ENCODE measurements at regions of chr14 and their contacts with region 1.

Region 1: DNA sequence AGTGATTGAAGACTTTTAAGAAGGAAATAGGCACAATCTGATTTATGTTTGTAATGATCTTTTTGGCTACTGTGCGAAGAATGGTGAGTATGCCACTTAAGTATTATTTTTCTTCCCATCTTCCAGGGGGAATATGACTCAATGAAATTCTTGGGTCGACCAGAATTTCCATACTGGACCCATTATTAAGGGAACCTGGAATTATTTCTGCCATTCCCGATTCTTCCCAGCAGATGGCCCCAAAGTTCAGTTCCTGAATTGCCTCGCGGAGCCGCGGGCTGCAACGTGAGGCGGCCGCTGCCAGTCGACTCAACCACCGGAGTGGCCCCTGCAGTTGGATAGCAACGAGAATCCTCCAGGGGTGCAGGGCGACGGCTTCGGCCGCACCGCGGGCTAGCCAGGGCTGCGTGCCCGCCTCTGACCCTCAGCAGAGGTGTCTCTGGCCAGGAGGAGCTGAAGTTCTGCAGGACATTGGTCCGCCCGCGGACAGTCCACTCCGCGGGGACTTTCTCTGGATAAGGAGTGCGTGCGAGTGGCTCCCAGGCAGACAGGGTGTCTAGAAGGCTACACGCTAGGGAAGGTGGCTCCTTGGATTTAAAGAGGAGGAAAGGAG is 628 bp upstream of the TSHR start:
- DNase-seq: peak; percentile 70 to 88 (median 76)
- ATAC-seq: peak; percentile 76 to 97 (median 92)
- H3K4me3 ChIP-seq: peak overlapping the region; percentile 16 to 67 (median 54)
- H3K27ac ChIP-seq: no peak overlapping the region
- H3K4me1 ChIP-seq: peaks cover 0 to 23% (median 3%) of the 10 kb centered on the region in 12 donors
- H3K27me3 ChIP-seq: peaks cover 0 to 14% (median 3%) of the 10 kb centered on the region in 9 donors
- CTCF ChIP-seq: peak; percentile 69 to 89 (median 79)
- POLR2A ChIP-seq: no peak

Region 2: DNA sequence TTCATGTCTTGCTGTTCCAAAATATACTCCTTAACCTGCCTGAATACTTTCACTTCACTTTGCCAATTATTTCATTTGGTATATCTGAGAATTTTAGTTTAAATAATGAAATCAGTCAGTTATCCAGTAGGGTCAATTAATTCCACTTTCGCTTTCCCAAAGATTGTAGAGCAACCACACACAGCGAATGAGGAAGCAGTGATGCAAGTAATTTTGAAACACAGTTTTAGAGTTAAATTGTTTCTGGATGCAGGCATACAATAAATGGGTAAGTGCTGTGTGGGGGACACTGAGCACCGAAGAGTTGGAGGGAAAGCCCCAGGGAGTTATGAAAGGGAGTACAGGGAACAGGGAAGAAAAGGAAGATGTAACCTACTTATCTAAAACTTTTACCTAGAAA is 63.5 kb after region 1 on chr14:
- intact Hi-C with region 1: no loop called
- DNase-seq: no peak
- ATAC-seq: no peak
- H3K4me3 ChIP-seq: peak overlapping the region in 1 of 12 donors; percentile 2
- H3K27ac ChIP-seq: peak overlapping the region in 3 of 12 donors; percentile 4 to 59 (median 38)
- H3K4me1 ChIP-seq: peaks cover 0 to 11% (median 0%) of the 10 kb centered on the region in 12 donors
- H3K27me3 ChIP-seq: no peaks in the 10 kb centered on the region
- CTCF ChIP-seq: no peak
- POLR2A ChIP-seq: no peak

Region 3: GRCh38 chr14:81164167-81164774 is 209.5 kb after region 1 on chr14:
- intact Hi-C with region 1: loop called in 1 of 10 experiments (anchors 10 kb)
- DNase-seq: peak in 4 of 5 donors; percentile 26 to 54 (median 32)
- ATAC-seq: peak; percentile 69 to 96 (median 91)
- H3K4me3 ChIP-seq: no peak overlapping the region
- H3K27ac ChIP-seq: no peak overlapping the region
- H3K4me1 ChIP-seq: peaks cover 0 to 10% (median under 1%) of the 10 kb centered on the region in 12 donors
- H3K27me3 ChIP-seq: no peaks in the 10 kb centered on the region
- CTCF ChIP-seq: peak in 11 of 12 donors; percentile 25 to 59 (median 39)
- POLR2A ChIP-seq: no peak

Region 4: GRCh38 chr14:81211844-81212243 is 257.1 kb after region 1 on chr14:
- intact Hi-C with region 1: loop called in 2 of 10 experiments (anchors 5 kb)
- DNase-seq: peak in 3 of 5 donors; percentile 21 to 72 (median 50)
- ATAC-seq: peak in 3 of 4 donors; percentile 84 to 86 (median 85)
- H3K4me3 ChIP-seq: no peak overlapping the region
- H3K27ac ChIP-seq: no peak overlapping the region
- H3K4me1 ChIP-seq: peaks cover 0 to 33% (median 15%) of the 10 kb centered on the region in 12 donors
- H3K27me3 ChIP-seq: no peaks in the 10 kb centered on the region
- CTCF ChIP-seq: peak in 11 of 12 donors; percentile 29 to 58 (median 43)
- POLR2A ChIP-seq: no peak

Region 5: GRCh38 chr14:81453166-81453766 is 498.5 kb after region 1 on chr14:
- intact Hi-C with region 1: loop called in 2 of 10 experiments (anchors 10 kb)
- DNase-seq: peak in 3 of 5 donors; percentile 33 to 49 (median 37)
- ATAC-seq: peak in 1 of 4 donors; percentile 30
- H3K4me3 ChIP-seq: peak overlapping the region in 1 of 12 donors; percentile 34
- H3K27ac ChIP-seq: peak overlapping the region in 2 of 12 donors; percentile 3 to 25
- H3K4me1 ChIP-seq: peaks cover 0 to 34% (median 6%) of the 10 kb centered on the region in 12 donors
- H3K27me3 ChIP-seq: peaks cover 0 to 18% (median 0%) of the 10 kb centered on the region in 9 donors
- CTCF ChIP-seq: peak; percentile 72 to 87 (median 80)
- POLR2A ChIP-seq: no peak

Measured in heart left ventricle (tissue), 16 donors.